ENCODE measurements at regions of chr3 and their contacts with region 1.

Region 1: GRCh38 chr3:150421799-150422548 is 13.9 kb downstream of the TSC22D2 start:
- DNase-seq: no peak
- ATAC-seq: no peak
- H3K4me3 ChIP-seq: no peak overlapping the region
- H3K27ac ChIP-seq: no peak overlapping the region
- H3K4me1 ChIP-seq: peaks cover 50 to 65% of the 10 kb centered on the region in 2 donors
- H3K27me3 ChIP-seq: no peaks in the 10 kb centered on the region
- CTCF ChIP-seq: no peak
- POLR2A ChIP-seq: no peak

Region 2: GRCh38 chr3:150335631-150336030 is 86.3 kb before region 1 on chr3:
- in situ Hi-C with region 1: no loop called
- intact Hi-C with region 1: no loop called
- DNase-seq: no peak
- ATAC-seq: no peak
- H3K4me3 ChIP-seq: no peak overlapping the region
- H3K27ac ChIP-seq: no peak overlapping the region
- H3K4me1 ChIP-seq: no peaks in the 10 kb centered on the region
- H3K27me3 ChIP-seq: no peaks in the 10 kb centered on the region
- CTCF ChIP-seq: no peak
- POLR2A ChIP-seq: no peak

Region 3: DNA sequence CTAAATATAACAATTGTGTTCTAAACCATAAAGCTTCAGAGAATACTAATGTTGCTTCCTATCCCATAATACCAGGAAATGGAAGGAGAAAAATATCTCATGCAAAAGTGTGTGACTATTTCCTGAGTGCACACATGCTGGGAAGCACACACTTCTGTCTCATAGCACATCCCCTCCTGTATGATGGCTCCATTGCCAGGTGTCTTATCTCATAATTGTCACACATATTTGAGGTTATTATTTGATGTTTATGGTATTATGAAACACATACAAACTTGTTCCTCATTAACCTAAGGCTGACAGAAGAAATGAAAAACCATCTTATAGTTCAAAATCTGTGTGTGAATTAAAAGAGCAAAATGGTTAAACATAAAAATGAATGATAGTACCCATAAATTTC is 58.9 kb after region 1 on chr3:
- in situ Hi-C with region 1: loop called in 1 of 4 experiments (anchors 10 kb)
- intact Hi-C with region 1: no loop called
- DNase-seq: no peak
- ATAC-seq: no peak
- H3K4me3 ChIP-seq: no peak overlapping the region
- H3K27ac ChIP-seq: no peak overlapping the region
- H3K4me1 ChIP-seq: no peaks in the 10 kb centered on the region
- H3K27me3 ChIP-seq: no peaks in the 10 kb centered on the region
- CTCF ChIP-seq: no peak
- POLR2A ChIP-seq: no peak